ENCODE measurements at regions of chr2 and their contacts with region 1.

Region 1: DNA sequence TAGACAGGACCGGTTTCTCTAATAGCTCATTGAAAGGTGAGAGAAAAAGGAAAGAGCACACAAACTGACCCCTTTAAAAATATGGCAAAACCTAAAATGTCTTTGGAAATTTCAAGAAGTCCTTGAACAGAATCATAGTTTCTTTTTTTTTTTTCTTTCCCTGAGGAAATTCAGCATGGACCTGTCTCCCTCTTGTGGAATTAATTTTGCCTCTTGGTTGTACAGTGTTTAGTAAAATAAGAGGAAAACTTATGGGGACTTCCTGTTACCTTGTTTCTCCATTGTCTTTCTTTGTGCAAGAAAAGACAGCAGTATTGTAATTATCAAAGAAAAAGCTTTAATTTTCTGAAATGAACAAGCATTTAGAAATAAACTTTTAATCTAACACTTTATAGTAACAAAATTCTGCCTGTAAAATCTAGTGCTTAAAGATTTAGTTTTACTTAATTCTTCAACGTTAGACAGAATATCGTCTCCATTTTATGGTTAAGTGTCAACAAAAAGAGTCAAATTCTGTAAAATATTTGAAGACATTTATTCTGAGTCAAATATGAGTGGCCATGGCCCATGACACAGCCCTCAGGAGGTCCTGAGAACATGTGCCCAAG is 176.3 kb upstream of the NABP1 start:
- DNase-seq: no peak
- H3K4me3 ChIP-seq: no peak overlapping the region
- H3K27ac ChIP-seq: peak overlapping the region in 1 of 2 donors; percentile 43
- H3K4me1 ChIP-seq: peaks cover 7% of the 10 kb centered on the region
- H3K27me3 ChIP-seq: no peaks in the 10 kb centered on the region
- CTCF ChIP-seq: peak; percentile 45 to 67 (median 59)
- POLR2A ChIP-seq: no peak

Region 2: DNA sequence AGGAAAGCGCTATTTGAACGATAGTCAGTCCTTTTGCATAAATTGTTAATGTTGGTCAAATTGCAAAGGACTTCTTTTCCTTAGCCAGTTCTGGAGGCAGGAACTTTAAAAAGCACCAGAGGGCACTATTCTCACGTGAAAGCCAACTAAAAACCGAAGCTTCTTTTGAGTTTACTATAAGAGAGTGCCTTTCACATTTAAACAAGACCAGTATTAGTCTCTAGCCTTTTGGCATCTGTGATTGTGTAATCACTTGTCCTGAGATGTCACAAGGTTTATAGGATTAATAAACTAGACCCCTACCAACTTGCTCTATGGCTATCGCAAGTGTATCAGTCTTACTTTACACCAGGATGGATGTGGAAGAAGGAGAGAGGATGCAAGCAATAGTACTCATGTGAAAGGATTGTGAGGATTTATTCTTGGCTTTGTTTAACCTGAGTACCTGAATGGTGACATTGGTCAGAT is 336.5 kb before region 1 on chr2:
- intact Hi-C with region 1: loop called (anchors 5 kb)
- DNase-seq: no peak
- H3K4me3 ChIP-seq: no peak overlapping the region
- H3K27ac ChIP-seq: no peak overlapping the region
- H3K4me1 ChIP-seq: no peaks in the 10 kb centered on the region
- H3K27me3 ChIP-seq: no peaks in the 10 kb centered on the region
- CTCF ChIP-seq: peak in 1 of 3 experiments; percentile 55
- POLR2A ChIP-seq: no peak

Region 3: GRCh38 chr2:191243154-191243553 is 258.5 kb before region 1 on chr2:
- intact Hi-C with region 1: loop called (anchors 5 kb)
- DNase-seq: no peak
- H3K4me3 ChIP-seq: no peak overlapping the region
- H3K27ac ChIP-seq: no peak overlapping the region
- H3K4me1 ChIP-seq: peaks cover 5% of the 10 kb centered on the region
- H3K27me3 ChIP-seq: no peaks in the 10 kb centered on the region
- CTCF ChIP-seq: no peak
- POLR2A ChIP-seq: no peak

Region 4: DNA sequence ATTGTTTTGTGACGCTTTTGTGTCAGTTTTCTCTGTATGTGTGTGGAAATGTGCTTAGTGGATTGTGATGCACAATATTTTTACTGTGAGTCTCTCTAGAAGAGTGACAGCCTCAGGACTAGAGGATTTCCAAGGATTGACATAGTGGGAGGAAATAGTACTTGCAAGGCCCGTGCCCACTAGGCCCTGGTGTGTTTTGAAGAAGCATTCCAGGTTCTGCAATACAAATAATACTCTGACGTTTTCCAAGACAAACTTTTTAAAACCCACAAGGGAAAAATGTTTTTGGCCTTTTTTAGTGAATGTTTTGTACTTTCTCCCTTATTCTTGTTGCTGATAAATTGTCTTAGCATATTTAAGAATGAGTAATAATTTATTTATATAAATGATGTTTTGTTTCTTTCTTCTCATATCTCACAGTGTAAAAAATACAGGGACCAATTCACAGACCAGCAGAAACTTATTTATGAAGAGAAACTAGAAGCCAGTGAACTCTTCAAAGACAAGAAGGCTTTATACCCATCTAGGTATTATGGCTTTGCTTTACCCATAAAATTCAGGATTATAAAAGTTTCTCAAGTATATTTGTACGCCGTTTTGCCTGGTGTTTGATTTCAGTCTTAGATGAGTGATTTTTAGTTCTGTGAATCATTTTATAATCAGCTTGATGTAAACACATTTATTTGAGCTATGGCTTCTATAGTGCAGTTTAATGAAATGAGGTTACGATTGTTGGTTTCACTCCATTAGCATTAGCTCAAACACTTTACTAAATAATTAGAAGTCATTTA is 90.8 kb before region 1 on chr2:
- intact Hi-C with region 1: no loop called
- DNase-seq: no peak
- H3K4me3 ChIP-seq: no peak overlapping the region
- H3K27ac ChIP-seq: peak overlapping the region in 1 of 2 donors; percentile 31
- H3K4me1 ChIP-seq: no peaks in the 10 kb centered on the region
- H3K27me3 ChIP-seq: no peaks in the 10 kb centered on the region
- CTCF ChIP-seq: no peak
- POLR2A ChIP-seq: no peak